Ascending aorta (tissue), 2 donors: ENCODE measurements at regions of chr1 and their contacts with region 1.

Region 1: DNA sequence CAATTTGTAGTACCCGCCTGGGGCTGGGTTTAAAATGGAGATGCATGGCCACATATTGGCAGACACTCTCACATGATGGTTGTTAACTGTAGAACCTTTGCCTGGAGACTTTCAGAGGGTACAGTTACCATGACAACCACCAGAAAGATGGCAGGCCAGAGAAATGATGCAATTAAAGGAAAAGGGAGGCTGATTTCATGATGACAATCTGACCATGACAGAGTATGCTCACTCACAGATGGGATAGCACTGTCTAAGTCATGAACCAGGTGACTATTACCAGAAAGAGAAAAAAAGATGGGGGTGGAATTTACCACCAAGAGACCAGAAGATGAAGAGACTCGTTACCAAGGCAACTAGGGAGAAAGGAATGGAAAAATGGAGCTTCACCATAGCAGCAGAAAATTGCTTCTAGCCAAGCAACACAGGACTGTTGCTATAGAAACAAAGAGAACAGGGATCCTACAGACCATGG is 3.5 kb upstream of the TRIT1 start:
- DNase-seq: no peak
- H3K4me3 ChIP-seq: no peak overlapping the region
- H3K27ac ChIP-seq: no peak overlapping the region
- H3K4me1 ChIP-seq: peaks cover 4 to 6% of the 10 kb centered on the region in 2 donors
- H3K27me3 ChIP-seq: no peaks in the 10 kb centered on the region
- CTCF ChIP-seq: no peak

Region 2: GRCh38 chr1:39954816-39955546 is 68.2 kb after region 1 on chr1 and contains the start of gene MFSD2A:
- intact Hi-C with region 1: loop called (anchors 10 kb)
- DNase-seq: peak; percentile 64 to 95
- H3K4me3 ChIP-seq: peak within 1 kb of the TSS; percentile 60 to 70
- H3K27ac ChIP-seq: peak within 1 kb of the TSS; percentile 41 to 42
- H3K4me1 ChIP-seq: peaks cover 2 to 12% of the 10 kb centered on the region in 2 donors
- H3K27me3 ChIP-seq: no peaks in the 10 kb centered on the region
- CTCF ChIP-seq: no peak
- total RNA-seq, gene MFSD2A: 0.32 TPM